MCF 10A (cell line): ENCODE measurements at regions of chr5 and their contacts with region 1.

Region 1: DNA sequence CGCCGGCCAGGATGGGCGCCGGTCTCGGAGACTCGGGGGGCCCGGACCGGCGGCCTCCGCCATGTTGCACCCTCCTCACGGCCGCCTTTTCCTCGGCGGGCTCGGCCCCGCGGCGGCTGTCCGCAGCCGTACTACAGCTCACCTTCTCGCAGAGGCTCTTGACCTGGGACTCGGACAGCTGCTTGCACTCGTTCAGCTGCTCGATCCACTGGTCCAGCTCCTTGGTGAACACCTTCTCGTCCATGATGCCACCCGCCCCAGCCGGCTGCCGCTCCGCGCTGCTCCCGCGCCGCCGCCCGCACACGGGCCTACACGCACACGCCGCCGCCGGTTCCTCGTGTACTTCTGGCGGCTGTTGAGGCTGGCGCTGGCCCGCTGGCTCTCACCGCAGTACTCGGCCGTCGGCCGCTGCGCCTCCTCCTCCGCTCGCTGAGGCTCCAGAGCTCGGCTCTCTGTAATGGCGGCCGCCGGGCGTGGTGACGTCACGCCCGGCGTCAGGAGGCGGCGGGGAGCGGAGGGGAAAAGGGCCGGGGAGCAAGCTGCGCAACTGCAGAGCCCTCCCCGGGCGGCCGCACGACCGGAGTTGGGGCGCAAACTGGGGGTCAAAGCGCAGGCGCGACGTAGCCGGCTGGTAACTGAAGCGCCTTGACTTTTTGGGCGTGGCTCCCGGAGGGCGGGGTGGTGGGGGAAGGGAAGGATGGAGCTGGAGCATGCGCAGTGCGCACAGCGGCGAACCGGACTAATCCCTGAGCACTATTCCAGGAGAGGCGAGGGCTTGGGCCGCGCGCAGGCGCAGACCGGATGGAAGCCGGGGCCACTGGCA is at the start of gene PPP2CA:
- DNase-seq: peak; percentile 99
- H3K4me3 Mint-ChIP-seq: peak within 1 kb of the TSS; percentile 97
- H3K27ac Mint-ChIP-seq: peak within 1 kb of the TSS; percentile 100
- H3K4me1 Mint-ChIP-seq: peaks cover 34% of the 10 kb centered on the region
- H3K27me3 Mint-ChIP-seq: no peaks in the 10 kb centered on the region
- CTCF ChIP-seq: no peak
- total RNA-seq, gene PPP2CA: 317 and 359 TPM in 2 replicates

Region 2: GRCh38 chr5:134124289-134125038 is 101.4 kb before region 1 on chr5:
- CTCF ChIA-PET with region 1: no interaction called
- POLR2A ChIA-PET with region 1: no interaction called
- intact Hi-C with region 1: no loop called
- DNase-seq: peak; percentile 76
- H3K4me3 Mint-ChIP-seq: no peak overlapping the region
- H3K27ac Mint-ChIP-seq: no peak overlapping the region
- H3K4me1 Mint-ChIP-seq: peaks cover 18% of the 10 kb centered on the region
- H3K27me3 Mint-ChIP-seq: no peaks in the 10 kb centered on the region
- CTCF ChIP-seq: no peak

Region 3: GRCh38 chr5:134184155-134185135 is 41.4 kb before region 1 on chr5:
- CTCF ChIA-PET with region 1: interaction called, 82 read pairs
- POLR2A ChIA-PET with region 1: interaction called, 14 read pairs
- intact Hi-C with region 1: loop called (anchors 2 kb)
- DNase-seq: peak; percentile 87
- H3K4me3 Mint-ChIP-seq: no peak overlapping the region
- H3K27ac Mint-ChIP-seq: no peak overlapping the region
- H3K4me1 Mint-ChIP-seq: no peaks in the 10 kb centered on the region
- H3K27me3 Mint-ChIP-seq: no peaks in the 10 kb centered on the region
- CTCF ChIP-seq: peak; percentile 99

Region 4: DNA sequence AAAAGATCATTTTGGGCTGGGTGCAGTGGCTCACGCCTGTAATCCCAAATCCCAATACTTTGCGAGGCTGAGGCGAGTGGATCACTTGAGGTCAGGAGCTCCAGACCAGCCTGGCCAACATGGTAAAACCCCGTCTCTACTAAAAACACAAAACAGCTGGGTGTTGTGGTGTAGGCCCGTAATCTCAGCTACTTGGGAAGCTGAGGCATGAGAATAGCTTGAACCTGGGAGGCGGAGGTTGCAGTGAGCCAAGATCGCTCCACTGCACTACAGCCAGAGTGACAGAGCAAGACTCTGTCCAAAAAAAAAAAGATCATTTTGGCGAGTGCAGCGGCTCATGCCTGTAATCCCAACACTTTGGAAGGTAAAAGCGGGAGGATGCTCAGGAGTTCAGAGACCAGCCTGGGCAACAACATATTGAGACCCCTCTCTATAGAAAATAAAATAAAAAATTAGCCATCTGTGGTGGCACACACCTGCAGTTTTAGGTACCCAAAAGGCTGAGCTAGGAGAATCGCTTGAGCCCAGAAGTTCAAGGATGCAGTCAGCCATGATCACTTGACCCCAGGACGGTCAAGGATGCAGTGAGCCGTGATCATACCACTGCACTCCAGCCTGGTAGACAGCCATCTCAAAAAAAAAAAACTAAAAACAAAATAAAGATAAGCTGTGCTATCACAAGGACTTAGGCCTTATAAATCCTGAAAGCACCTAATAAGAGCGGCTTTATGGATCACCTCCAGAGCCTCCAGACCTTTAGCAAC is 16.2 kb before region 1 on chr5:
- CTCF ChIA-PET with region 1: interaction called, 6 read pairs
- POLR2A ChIA-PET with region 1: interaction called, 148 read pairs
- intact Hi-C with region 1: no loop called
- DNase-seq: no peak
- H3K4me3 Mint-ChIP-seq: no peak overlapping the region
- H3K27ac Mint-ChIP-seq: no peak overlapping the region
- H3K4me1 Mint-ChIP-seq: peaks cover 15% of the 10 kb centered on the region
- H3K27me3 Mint-ChIP-seq: no peaks in the 10 kb centered on the region
- CTCF ChIP-seq: no peak

Region 5: GRCh38 chr5:134255418-134256175 is 29.8 kb after region 1 on chr5:
- CTCF ChIA-PET with region 1: interaction called, 3 read pairs
- POLR2A ChIA-PET with region 1: interaction called, 21 read pairs
- intact Hi-C with region 1: no loop called
- DNase-seq: peak; percentile 65
- H3K4me3 Mint-ChIP-seq: no peak overlapping the region
- H3K27ac Mint-ChIP-seq: peak overlapping the region; percentile 33
- H3K4me1 Mint-ChIP-seq: peaks cover 27% of the 10 kb centered on the region
- H3K27me3 Mint-ChIP-seq: no peaks in the 10 kb centered on the region
- CTCF ChIP-seq: no peak

Region 6: GRCh38 chr5:134370871-134371833 is 145.3 kb after region 1 on chr5 and contains the start of gene UBE2B:
- CTCF ChIA-PET with region 1: interaction called, 3 read pairs
- POLR2A ChIA-PET with region 1: interaction called, 40 read pairs
- intact Hi-C with region 1: no loop called
- DNase-seq: peak; percentile 100
- H3K4me3 Mint-ChIP-seq: peak within 1 kb of the TSS; percentile 99
- H3K27ac Mint-ChIP-seq: peak within 1 kb of the TSS; percentile 99
- H3K4me1 Mint-ChIP-seq: peaks cover 28% of the 10 kb centered on the region
- H3K27me3 Mint-ChIP-seq: no peaks in the 10 kb centered on the region
- CTCF ChIP-seq: no peak
- total RNA-seq, gene UBE2B: 178 and 186 TPM in 2 replicates